ENCODE measurements at regions of chr20 and their contacts with region 1.

Region 1: GRCh38 chr20:1965520-1966351 is 28.1 kb downstream of the PDYN start:
- DNase-seq: peak; percentile 80 to 84
- ATAC-seq: peak; percentile 81 to 93
- H3K4me3 ChIP-seq: no peak overlapping the region
- H3K27ac ChIP-seq: peak overlapping the region; percentile 24 to 31; a peak in 3 of 6 replicates
- H3K4me1 ChIP-seq: 0 out of 3 replicates have a peak, but pooled peaks cover 6% of the 10 kb centered on the region
- CTCF ChIP-seq: peak; percentile 99
- EP300 ChIP-seq: no peak
- POLR2A ChIP-seq: no peak
- RAD21 ChIP-seq: peak; percentile 93 to 95

Region 2: GRCh38 chr20:1952737-1953530 is 12.8 kb before region 1 on chr20:
- CTCF ChIA-PET with region 1: interaction called, 33 read pairs
- POLR2A ChIA-PET with region 1: no interaction called
- DNase-seq: no peak
- ATAC-seq: no peak
- H3K4me3 ChIP-seq: no peak overlapping the region
- H3K27ac ChIP-seq: no peak overlapping the region
- H3K4me1 ChIP-seq: no peaks in the 10 kb centered on the region
- CTCF ChIP-seq: no peak
- EP300 ChIP-seq: no peak
- POLR2A ChIP-seq: no peak
- RAD21 ChIP-seq: no peak

Region 3: DNA sequence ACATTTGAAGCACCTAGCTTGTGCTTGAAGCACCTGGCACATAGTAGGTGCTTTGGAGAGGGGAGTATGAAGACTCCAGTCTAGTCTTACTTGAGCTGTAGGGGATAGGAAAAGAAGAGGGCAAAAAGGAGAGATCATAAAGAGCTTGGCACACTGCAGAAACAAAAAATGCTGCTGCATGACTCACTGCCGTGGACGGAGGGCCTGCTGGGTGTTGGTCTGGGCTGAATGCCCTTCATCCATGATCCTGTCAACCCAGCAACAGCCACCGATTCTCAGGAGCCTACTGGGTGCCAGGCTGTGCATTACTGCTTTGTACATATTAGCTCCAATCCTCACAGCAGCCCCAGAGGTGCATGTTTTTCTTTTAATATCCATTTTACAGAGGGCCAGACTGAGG is 22.1 kb after region 1 on chr20:
- CTCF ChIA-PET with region 1: interaction called, 19 read pairs
- POLR2A ChIA-PET with region 1: no interaction called
- DNase-seq: no peak
- ATAC-seq: peak in 1 of 2 experiments; percentile 51; a peak in 2 of 6 replicates
- H3K4me3 ChIP-seq: no peak overlapping the region
- H3K27ac ChIP-seq: no peak overlapping the region
- H3K4me1 ChIP-seq: no peaks in the 10 kb centered on the region
- CTCF ChIP-seq: no peak
- EP300 ChIP-seq: no peak
- POLR2A ChIP-seq: no peak
- RAD21 ChIP-seq: no peak

Region 4: DNA sequence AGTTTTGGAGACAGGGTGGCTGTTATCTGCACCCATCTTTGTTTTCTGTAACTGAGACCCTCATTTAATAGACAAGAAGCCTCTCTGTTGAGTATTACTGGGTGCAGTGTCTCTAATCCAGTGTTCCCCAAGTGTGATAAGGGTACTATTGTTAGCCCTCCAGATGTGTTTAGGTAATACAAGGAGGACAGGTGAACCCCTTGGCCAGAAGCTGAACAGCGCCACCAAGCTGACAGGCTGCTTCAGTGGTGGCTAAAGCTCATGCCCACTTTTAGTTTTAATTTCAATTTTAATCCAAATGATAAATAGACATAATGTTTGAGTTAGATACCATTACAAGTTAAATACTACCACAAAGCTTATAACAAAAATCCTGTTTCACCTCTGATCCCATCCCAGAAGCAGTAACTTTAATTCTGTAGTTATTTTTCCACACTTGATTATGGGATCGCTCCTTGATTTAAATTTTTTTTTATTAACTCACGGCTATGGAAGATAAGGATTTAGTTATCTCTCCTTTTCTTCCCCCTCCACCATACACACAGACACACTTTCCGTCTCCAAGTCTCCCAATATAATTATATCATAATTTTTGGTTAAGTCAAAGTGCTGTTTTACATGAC is 127.5 kb after region 1 on chr20:
- CTCF ChIA-PET with region 1: interaction called, 10 read pairs
- POLR2A ChIA-PET with region 1: no interaction called
- DNase-seq: peak; percentile 59 to 60
- ATAC-seq: peak; percentile 66 to 85; a peak in 4 of 6 replicates
- H3K4me3 ChIP-seq: no peak overlapping the region
- H3K27ac ChIP-seq: no peak overlapping the region
- H3K4me1 ChIP-seq: no peaks in the 10 kb centered on the region
- CTCF ChIP-seq: peak; percentile 68
- EP300 ChIP-seq: no peak
- POLR2A ChIP-seq: no peak
- RAD21 ChIP-seq: peak; percentile 66 to 80

Region 5: GRCh38 chr20:2178318-2179232 is 212.8 kb after region 1 on chr20:
- CTCF ChIA-PET with region 1: interaction called, 187 read pairs
- POLR2A ChIA-PET with region 1: no interaction called
- DNase-seq: no peak
- ATAC-seq: no peak
- H3K4me3 ChIP-seq: no peak overlapping the region
- H3K27ac ChIP-seq: no peak overlapping the region
- H3K4me1 ChIP-seq: no peaks in the 10 kb centered on the region
- CTCF ChIP-seq: no peak
- EP300 ChIP-seq: no peak
- POLR2A ChIP-seq: no peak
- RAD21 ChIP-seq: no peak

Region 6: GRCh38 chr20:2195614-2196013 is 229.9 kb after region 1 on chr20:
- CTCF ChIA-PET with region 1: interaction called, 13 read pairs
- POLR2A ChIA-PET with region 1: no interaction called
- DNase-seq: no peak
- ATAC-seq: peak; percentile 72 to 82
- H3K4me3 ChIP-seq: no peak overlapping the region
- H3K27ac ChIP-seq: no peak overlapping the region
- H3K4me1 ChIP-seq: no peaks in the 10 kb centered on the region
- CTCF ChIP-seq: no peak
- EP300 ChIP-seq: no peak
- POLR2A ChIP-seq: no peak
- RAD21 ChIP-seq: no peak

Measured in A549 (cell line).